ENCODE measurements at regions of chr6 and their contacts with region 1.

Region 1: GRCh38 chr6:158092806-158093205 is 75.3 kb downstream of the SERAC1 start:
- DNase-seq: no peak
- ATAC-seq: no peak
- H3K4me3 ChIP-seq: no peak overlapping the region
- H3K4me3 Mint-ChIP-seq: no peak overlapping the region
- H3K27ac ChIP-seq: no peak overlapping the region
- H3K27ac Mint-ChIP-seq: no peak overlapping the region
- H3K4me1 ChIP-seq: no peaks in the 10 kb centered on the region
- H3K4me1 Mint-ChIP-seq: no peaks in the 10 kb centered on the region
- H3K27me3 ChIP-seq: no peaks in the 10 kb centered on the region
- H3K27me3 Mint-ChIP-seq: no peaks in the 10 kb centered on the region
- CTCF ChIP-seq: no peak

Region 2: DNA sequence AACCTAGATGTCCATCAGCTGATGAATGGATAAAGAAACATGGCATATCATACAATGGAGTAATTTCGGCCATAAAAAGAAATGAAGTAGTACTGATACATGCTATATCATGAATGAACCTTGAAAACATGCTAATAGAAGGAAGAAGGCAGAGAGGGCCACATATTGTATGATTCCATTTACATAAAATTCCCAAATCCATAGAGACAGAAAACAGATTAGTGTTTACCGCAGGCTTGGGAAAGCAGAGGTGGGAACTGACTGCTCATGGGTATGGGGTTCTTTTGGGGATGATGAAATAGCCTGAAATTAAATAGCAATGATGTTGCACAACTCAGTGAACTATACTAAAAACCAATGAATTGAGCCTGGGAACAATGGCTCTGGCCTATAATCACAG is 16.9 kb after region 1 on chr6:
- CTCF ChIA-PET with region 1: interaction called, 3 read pairs
- POLR2A ChIA-PET with region 1: interaction called, 3 read pairs
- intact Hi-C with region 1: loop called in 1 of 2 experiments (anchors 1 kb)
- DNase-seq: no peak
- ATAC-seq: no peak
- H3K4me3 ChIP-seq: no peak overlapping the region
- H3K4me3 Mint-ChIP-seq: no peak overlapping the region
- H3K27ac ChIP-seq: no peak overlapping the region
- H3K27ac Mint-ChIP-seq: no peak overlapping the region
- H3K4me1 ChIP-seq: no peaks in the 10 kb centered on the region
- H3K4me1 Mint-ChIP-seq: no peaks in the 10 kb centered on the region
- H3K27me3 ChIP-seq: no peaks in the 10 kb centered on the region
- H3K27me3 Mint-ChIP-seq: no peaks in the 10 kb centered on the region
- CTCF ChIP-seq: no peak